Activated B cell treated with CpG ODN at 0.5 μM for 24 hours (primary cell): ENCODE measurements at regions of chr12 and their contacts with region 1.

Region 1: DNA sequence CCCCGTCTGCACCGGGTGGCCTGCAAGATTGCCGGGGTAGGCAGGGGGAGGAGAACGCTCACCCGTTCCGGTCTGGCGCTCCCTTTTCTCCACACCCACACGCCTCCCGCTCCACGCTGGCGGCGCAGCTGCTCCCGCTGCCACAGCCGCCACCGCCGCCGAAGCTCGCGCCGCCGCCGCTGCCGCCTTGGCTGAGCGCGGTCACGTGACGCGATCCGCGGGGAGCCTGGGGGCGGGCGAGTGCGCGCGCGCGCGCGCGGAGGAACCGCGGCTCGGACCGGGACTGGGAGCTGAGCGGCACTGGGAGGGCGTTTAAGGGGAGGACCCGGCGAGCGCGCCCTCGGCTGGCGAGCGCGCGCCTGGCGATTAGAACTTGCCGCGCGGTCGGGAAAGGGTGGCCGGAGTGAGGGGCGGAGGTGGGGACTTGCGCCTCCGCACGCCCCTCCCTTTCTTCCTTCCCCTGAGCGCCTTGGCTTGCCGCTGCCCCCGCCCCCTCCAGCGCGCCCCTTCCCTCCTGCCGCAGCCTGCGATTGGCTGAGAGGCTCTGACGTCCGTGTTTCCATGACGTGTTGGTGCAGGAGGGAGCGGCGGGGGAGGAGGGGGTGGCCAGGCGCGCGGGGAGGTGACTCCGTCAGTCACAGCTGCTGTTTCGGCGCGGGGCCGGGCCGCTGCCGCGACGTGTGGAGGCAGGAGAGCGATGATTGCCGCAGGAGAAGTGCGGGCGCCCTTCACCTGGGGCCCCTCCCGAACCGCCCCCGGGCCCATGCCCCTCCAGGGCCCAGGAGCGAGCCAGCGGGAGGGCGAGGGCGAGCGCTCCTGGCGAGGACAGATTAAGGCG is 738 bp upstream of the ATP2B1 start:
- DNase-seq: peak; percentile 97
- ATAC-seq: peak; percentile 75
- H3K4me3 Mint-ChIP-seq: peak overlapping the region; percentile 91
- H3K27ac Mint-ChIP-seq: peak overlapping the region; percentile 94
- H3K4me1 Mint-ChIP-seq: peaks cover 40% of the 10 kb centered on the region
- H3K27me3 Mint-ChIP-seq: no peaks in the 10 kb centered on the region
- CTCF ChIP-seq: no peak

Region 2: GRCh38 chr12:89556976-89557375 is 152.4 kb before region 1 on chr12:
- CTCF ChIA-PET with region 1: no interaction called
- POLR2A ChIA-PET with region 1: no interaction called
- intact Hi-C with region 1: no loop called
- DNase-seq: no peak
- ATAC-seq: no peak
- H3K4me3 Mint-ChIP-seq: no peak overlapping the region
- H3K27ac Mint-ChIP-seq: no peak overlapping the region
- H3K4me1 Mint-ChIP-seq: no peaks in the 10 kb centered on the region
- H3K27me3 Mint-ChIP-seq: no peaks in the 10 kb centered on the region
- CTCF ChIP-seq: no peak

Region 3: DNA sequence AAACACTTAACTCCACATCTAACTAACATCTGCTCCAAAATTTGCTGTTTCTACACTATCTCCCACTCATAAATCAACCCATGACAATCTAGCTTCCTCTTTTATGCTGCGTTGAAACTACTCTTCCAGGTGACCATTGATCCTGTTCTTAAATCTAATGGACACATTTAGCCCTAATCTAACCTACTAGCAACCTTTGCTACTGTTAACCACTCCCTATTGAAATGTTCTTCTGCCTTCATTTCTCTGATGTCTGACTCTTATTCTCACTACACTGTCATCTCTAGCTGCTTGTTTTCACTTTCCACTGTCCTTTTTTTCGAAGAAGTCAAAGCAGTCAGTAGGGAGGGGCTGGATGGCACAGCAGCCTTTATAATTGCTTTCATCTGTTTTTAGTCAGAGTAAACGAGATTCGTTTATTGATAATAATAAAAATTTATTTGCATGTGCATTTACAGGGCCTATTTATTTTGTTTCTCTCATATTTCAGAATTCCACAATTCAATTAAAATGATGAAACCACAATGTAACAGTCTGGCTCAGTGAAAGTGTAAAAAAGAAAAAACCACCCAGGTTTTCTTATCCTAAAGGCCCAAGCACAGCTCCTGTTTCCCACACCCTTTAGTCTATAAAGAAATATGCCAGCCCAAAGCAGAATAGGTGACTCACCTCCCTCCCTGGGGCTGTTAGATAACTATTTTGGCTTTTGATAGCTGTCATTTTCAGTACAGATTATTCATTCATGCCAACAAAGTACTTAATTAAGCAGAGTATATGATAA is 45.6 kb before region 1 on chr12:
- CTCF ChIA-PET with region 1: no interaction called
- POLR2A ChIA-PET with region 1: interaction called, 27 read pairs
- intact Hi-C with region 1: loop called (anchors 2 kb)
- DNase-seq: no peak
- ATAC-seq: peak; percentile 60
- H3K4me3 Mint-ChIP-seq: peak overlapping the region; percentile 25
- H3K27ac Mint-ChIP-seq: peak overlapping the region; percentile 46
- H3K4me1 Mint-ChIP-seq: peaks cover 84% of the 10 kb centered on the region
- H3K27me3 Mint-ChIP-seq: no peaks in the 10 kb centered on the region
- CTCF ChIP-seq: no peak

Region 4: DNA sequence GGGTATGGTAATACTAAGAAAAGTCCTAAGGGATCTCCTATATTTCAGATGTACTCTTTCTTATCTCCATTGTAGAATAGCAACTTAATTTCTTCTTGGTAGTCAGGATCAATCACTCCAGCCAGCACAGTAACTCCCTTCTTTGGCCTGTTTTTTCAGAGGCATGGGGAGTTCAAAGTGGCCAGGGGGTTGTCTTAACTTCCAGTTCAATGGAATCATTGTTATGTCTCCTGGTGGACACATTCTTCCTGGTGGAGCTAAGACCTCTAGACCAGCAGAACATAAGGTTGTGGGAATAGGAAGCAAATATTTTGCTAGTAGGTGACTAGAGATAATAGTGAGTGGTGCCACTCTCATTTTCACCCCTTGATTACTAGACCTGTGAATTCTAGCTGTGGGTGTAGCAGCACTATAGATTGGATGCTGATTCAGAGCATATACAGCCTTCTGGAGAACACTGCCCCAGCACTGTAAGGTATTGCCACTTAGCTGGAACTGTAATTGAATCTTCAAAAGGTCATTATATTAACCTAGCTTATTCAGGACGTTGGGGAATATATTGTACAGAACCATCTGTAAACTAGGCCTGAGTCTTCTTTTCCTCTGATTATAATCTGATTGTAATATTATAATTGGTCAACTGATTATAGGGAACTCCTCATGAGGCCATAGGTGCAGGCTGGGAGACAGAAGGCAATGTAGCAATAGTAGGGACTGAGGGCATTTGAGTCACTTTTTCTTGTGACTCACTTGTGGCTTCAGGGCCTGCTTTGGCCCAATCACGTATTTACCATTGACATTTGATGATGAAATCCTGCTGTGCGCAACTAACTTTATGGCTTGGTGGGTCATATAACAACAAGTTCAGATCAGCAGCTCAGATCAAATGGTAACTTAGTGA is 59.5 kb after region 1 on chr12:
- CTCF ChIA-PET with region 1: no interaction called
- POLR2A ChIA-PET with region 1: interaction called, 10 read pairs
- intact Hi-C with region 1: no loop called
- DNase-seq: no peak
- ATAC-seq: peak; percentile 40
- H3K4me3 Mint-ChIP-seq: no peak overlapping the region
- H3K27ac Mint-ChIP-seq: peak overlapping the region; percentile 41
- H3K4me1 Mint-ChIP-seq: peaks cover 20% of the 10 kb centered on the region
- H3K27me3 Mint-ChIP-seq: no peaks in the 10 kb centered on the region
- CTCF ChIP-seq: no peak

Region 5: GRCh38 chr12:89873745-89874144 is 164.4 kb after region 1 on chr12:
- CTCF ChIA-PET with region 1: no interaction called
- POLR2A ChIA-PET with region 1: interaction called, 84 read pairs
- intact Hi-C with region 1: no loop called
- DNase-seq: no peak
- ATAC-seq: peak; percentile 56
- H3K4me3 Mint-ChIP-seq: no peak overlapping the region
- H3K27ac Mint-ChIP-seq: no peak overlapping the region
- H3K4me1 Mint-ChIP-seq: peaks cover 51% of the 10 kb centered on the region
- H3K27me3 Mint-ChIP-seq: no peaks in the 10 kb centered on the region
- CTCF ChIP-seq: no peak

Region 6: DNA sequence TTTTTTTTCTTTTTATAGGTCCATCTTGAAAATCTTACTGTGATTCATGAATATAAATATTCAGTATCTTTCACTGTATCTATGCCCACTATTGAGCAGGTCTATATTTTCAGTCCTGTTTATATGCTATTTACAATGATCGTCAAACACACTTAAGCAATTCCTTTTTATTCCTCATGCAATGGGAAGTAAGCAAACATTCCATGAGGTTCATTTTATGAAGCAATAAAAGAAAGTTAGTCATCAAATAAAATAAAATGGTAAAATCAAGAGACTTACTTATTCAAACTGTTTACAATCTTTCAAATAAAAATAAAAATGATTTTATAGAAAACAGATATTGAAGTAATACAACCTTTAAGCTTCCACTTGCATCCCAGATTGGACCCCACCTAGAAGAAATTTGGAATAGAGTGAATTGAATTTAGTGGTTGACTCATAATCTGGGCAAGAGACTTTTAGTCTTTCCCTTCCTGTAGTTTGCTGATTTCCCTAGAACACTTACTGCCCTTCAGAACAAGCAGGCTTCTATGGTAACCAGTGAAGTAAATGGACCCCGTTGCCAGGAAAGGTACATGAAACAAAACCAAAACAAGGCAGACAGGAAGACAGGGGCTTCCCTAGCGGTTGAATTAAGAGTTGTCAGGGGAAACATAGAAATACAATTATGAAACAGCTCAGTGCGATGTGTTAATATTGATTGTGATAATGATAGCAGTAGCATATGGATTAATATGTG is 240.2 kb after region 1 on chr12:
- CTCF ChIA-PET with region 1: interaction called, 15 read pairs
- POLR2A ChIA-PET with region 1: interaction called, 62 read pairs
- intact Hi-C with region 1: loop called (anchors 1 kb)
- DNase-seq: no peak
- ATAC-seq: peak; percentile 70
- H3K4me3 Mint-ChIP-seq: peak overlapping the region; percentile 64
- H3K27ac Mint-ChIP-seq: peak overlapping the region; percentile 90
- H3K4me1 Mint-ChIP-seq: peaks cover 62% of the 10 kb centered on the region
- H3K27me3 Mint-ChIP-seq: no peaks in the 10 kb centered on the region
- CTCF ChIP-seq: no peak

Region 7: DNA sequence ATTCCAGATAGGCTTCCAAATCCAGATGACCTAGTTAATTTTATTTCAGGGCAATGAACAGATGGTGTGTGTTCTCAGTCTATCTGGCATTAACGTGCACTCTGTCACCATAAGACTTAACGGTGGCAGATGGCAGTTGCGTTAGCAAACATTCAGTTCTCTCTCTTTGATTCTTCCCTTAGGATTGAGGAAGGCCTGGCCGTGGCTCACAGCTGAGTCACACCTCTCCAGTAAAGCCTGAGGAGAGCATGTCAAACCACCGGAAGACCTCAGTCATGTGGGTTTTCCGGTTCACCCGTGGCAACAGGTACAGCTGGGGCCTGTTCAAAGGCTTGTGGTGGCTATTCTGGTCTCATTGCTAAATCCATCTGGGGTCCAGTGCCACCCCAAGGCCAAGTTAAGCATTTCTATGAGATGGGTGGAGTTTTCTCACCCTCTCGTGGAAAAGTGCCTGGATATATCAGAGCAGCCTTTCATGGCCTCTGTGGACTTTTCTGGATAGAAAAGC is 544.4 kb after region 1 on chr12:
- CTCF ChIA-PET with region 1: interaction called, 5 read pairs
- POLR2A ChIA-PET with region 1: interaction called, 3 read pairs
- intact Hi-C with region 1: loop called (anchors 5 kb)
- DNase-seq: peak; percentile 40
- ATAC-seq: peak; percentile 94
- H3K4me3 Mint-ChIP-seq: peak overlapping the region; percentile 64
- H3K27ac Mint-ChIP-seq: peak overlapping the region; percentile 87
- H3K4me1 Mint-ChIP-seq: peaks cover 26% of the 10 kb centered on the region
- H3K27me3 Mint-ChIP-seq: no peaks in the 10 kb centered on the region
- CTCF ChIP-seq: no peak